ENCODE measurements at regions of chr19 and their contacts with region 1.

Region 1: DNA sequence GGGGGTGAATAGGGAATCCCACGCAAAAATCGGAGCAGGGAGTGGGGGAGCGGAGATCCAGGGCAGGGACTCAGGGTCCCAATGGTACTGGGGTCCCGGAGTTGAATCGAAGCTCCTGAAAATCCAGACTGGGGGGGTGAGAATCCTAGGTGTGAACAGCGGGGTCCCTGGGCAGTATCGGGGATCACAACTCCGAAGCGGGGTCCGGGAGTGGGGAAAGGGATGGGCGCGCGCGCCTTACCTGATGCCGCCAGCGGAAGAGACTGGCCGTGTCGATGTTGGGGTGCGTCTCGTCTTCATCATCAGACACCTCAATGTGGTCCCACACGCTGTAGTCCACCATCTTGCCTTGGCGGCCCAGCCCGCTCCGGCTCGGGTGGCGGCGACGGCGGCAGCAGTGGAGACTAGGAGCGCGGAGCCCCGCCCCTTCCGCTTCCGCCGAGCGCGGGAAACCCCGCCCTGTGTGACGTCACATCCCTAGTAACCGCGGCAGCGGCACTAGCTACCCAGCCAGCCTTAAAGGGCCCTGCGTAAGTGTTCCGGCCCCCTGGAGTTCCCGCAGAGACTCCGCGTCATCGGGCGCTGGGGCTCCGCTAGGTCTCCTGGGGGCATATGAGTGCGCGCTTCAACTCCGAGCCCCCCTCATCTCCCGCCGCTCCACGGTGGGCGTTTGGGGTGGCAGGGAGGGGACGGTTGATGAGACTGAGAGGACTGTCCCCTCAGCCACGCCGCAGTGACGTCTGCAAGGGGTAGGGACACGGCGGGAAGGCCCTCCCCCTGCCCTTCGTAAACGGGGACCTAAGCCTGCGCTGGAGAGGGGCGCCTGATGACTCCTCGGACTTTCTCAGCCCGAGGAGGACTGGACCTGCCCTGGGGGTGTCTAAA is at the start of gene CDC37:
- DNase-seq: peak; percentile 96 to 98
- ATAC-seq: peak; percentile 90 to 95 (median 93)
- H3K4me3 ChIP-seq: peak within 1 kb of the TSS; percentile 84
- H3K27ac ChIP-seq: peak within 1 kb of the TSS; percentile 88
- H3K4me1 ChIP-seq: peaks cover 47% of the 10 kb centered on the region
- H3K27me3 ChIP-seq: peaks cover 0 to 22% (median 2%) of the 10 kb centered on the region in 3 donors
- CTCF ChIP-seq: no peak
- total RNA-seq, gene CDC37: 165 to 182 (median 171) TPM

Region 2: GRCh38 chr19:10424011-10424637 is 20.7 kb after region 1 on chr19:
- intact Hi-C with region 1: loop called (anchors 1 to 2 kb)
- DNase-seq: peak; percentile 83 to 91
- ATAC-seq: peak; percentile 88 to 94 (median 90)
- H3K4me3 ChIP-seq: peak overlapping the region; percentile 65
- H3K27ac ChIP-seq: peak overlapping the region; percentile 30
- H3K4me1 ChIP-seq: peaks cover 14% of the 10 kb centered on the region
- H3K27me3 ChIP-seq: peaks cover 0 to 47% (median 22%) of the 10 kb centered on the region in 3 donors
- CTCF ChIP-seq: peak; percentile 94

Region 3: DNA sequence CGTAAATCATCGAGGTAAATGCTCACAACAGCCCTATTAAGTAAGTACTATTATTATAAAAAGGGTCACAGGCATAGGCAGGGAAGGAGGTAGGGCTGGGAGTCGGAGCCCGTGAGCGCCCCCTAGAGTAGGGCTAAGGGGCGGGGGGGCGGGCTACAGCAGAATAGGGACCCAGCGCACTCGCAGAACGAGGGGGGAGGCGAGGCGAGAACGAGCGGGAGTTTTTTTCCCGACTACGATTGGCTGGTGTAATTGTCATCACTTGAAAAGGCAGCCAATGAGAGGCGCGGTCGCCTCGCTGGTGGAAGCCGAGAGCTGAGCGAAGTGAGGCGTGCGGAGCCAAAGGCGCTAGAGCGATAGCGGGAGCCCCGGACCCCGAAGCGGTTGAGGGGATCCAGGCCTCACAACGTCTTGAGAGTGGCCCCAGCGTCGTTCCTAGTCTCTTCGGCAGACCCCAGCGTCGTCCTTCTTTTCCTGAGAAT is 75.6 kb after region 1 on chr19:
- intact Hi-C with region 1: loop called in 1 of 2 experiments (anchors 5 kb)
- DNase-seq: peak; percentile 93 to 95
- ATAC-seq: peak; percentile 91 to 96 (median 94)
- H3K4me3 ChIP-seq: peak overlapping the region; percentile 66
- H3K27ac ChIP-seq: peak overlapping the region; percentile 59
- H3K4me1 ChIP-seq: no peaks in the 10 kb centered on the region
- H3K27me3 ChIP-seq: no peaks in the 10 kb centered on the region
- CTCF ChIP-seq: peak; percentile 78

Region 4: GRCh38 chr19:10565567-10566407 is 162.4 kb after region 1 on chr19 and contains the start of gene KRI1:
- intact Hi-C with region 1: loop called (anchors 5 to 10 kb)
- DNase-seq: peak; percentile 98 to 99
- ATAC-seq: peak; percentile 84 to 87 (median 85)
- H3K4me3 ChIP-seq: peak within 1 kb of the TSS; percentile 92
- H3K27ac ChIP-seq: peak within 1 kb of the TSS; percentile 82
- H3K4me1 ChIP-seq: peaks cover 33% of the 10 kb centered on the region
- H3K27me3 ChIP-seq: no peaks in the 10 kb centered on the region
- CTCF ChIP-seq: peak; percentile 33
- total RNA-seq, gene KRI1: 17.3 to 20.6 (median 20.3) TPM

Region 5: GRCh38 chr19:10574462-10574861 is 171.1 kb after region 1 on chr19:
- intact Hi-C with region 1: loop called (anchors 5 to 10 kb)
- DNase-seq: no peak
- ATAC-seq: no peak
- H3K4me3 ChIP-seq: no peak overlapping the region
- H3K27ac ChIP-seq: no peak overlapping the region
- H3K4me1 ChIP-seq: peaks cover 10% of the 10 kb centered on the region
- H3K27me3 ChIP-seq: no peaks in the 10 kb centered on the region
- CTCF ChIP-seq: no peak

Region 6: DNA sequence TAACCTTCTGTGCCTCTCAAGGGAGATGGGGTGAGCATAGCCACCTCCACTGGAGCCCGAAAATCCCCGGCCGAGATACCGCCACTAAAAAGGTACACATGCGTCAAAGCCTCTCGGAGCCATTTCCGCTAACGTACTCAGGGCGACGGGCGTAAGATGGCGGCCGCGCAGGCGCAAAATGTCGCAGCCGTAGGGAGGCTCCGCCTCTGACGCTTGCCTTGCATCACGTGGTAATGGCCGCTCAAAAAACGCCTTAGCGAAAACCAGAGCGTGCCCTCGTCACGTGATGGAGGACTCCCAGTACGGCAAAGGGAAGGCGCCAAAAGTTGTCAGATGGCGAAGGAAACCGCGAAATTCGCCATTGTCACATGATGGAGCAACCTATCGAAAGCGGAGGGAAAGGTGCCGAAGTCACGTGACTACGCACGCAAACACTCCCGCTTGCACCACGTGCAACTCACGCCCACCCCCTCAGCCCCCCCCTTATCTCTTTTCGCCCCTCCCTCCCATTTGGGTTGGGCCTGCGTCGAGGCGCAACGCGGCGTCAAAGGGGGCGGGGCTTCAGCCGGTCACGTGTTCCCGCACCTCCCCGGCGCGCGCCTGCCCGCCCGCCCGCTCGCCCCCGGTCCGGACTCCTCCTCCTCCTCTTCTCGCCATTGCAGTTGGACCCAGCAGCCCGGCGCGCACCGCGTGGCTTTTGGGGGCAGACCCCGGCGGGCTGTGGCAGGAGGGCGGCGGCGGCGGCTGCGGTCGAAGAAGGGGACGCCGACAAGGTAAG is 250.5 kb after region 1 on chr19 and contains the start of gene ILF3:
- intact Hi-C with region 1: loop called in 1 of 2 experiments (anchors 10 kb)
- DNase-seq: peak; percentile 100
- ATAC-seq: peak; percentile 89 to 93 (median 90)
- H3K4me3 ChIP-seq: peak within 1 kb of the TSS; percentile 99
- H3K27ac ChIP-seq: peak within 1 kb of the TSS; percentile 99
- H3K4me1 ChIP-seq: peaks cover 46% of the 10 kb centered on the region
- H3K27me3 ChIP-seq: no peaks in the 10 kb centered on the region
- CTCF ChIP-seq: no peak
- total RNA-seq, gene ILF3: 112 to 189 (median 157) TPM

Measured in psoas muscle (tissue), 8 donors.